Activated CD8-positive, alpha-beta T cell treated with anti-CD3 and anti-CD28 coated beads for 36 hours (primary cell): ENCODE measurements at regions of chr11 and their contacts with region 1.

Region 1: GRCh38 chr11:102614485-102614884 is 10.6 kb downstream of the MMP20 start:
- DNase-seq: no peak
- ATAC-seq: peak; percentile 28
- H3K4me3 Mint-ChIP-seq: no peak overlapping the region
- H3K27ac Mint-ChIP-seq: no peak overlapping the region
- H3K4me1 Mint-ChIP-seq: peaks cover 5% of the 10 kb centered on the region
- H3K27me3 Mint-ChIP-seq: no peaks in the 10 kb centered on the region
- CTCF ChIP-seq: peak; percentile 25

Region 2: GRCh38 chr11:102268329-102269193 is 345.9 kb before region 1 on chr11:
- CTCF ChIA-PET with region 1: interaction called, 15 read pairs
- POLR2A ChIA-PET with region 1: no interaction called
- intact Hi-C with region 1: no loop called
- DNase-seq: peak; percentile 87
- ATAC-seq: peak; percentile 99
- H3K4me3 Mint-ChIP-seq: peak overlapping the region; percentile 68
- H3K27ac Mint-ChIP-seq: no peak overlapping the region
- H3K4me1 Mint-ChIP-seq: peaks cover 19% of the 10 kb centered on the region
- H3K27me3 Mint-ChIP-seq: peaks cover 15% of the 10 kb centered on the region
- CTCF ChIP-seq: peak; percentile 66

Region 3: GRCh38 chr11:102293873-102294601 is 320.4 kb before region 1 on chr11:
- CTCF ChIA-PET with region 1: interaction called, 17 read pairs
- POLR2A ChIA-PET with region 1: no interaction called
- intact Hi-C with region 1: no loop called
- DNase-seq: peak; percentile 30
- ATAC-seq: peak; percentile 95
- H3K4me3 Mint-ChIP-seq: peak overlapping the region; percentile 78
- H3K27ac Mint-ChIP-seq: peak overlapping the region; percentile 96
- H3K4me1 Mint-ChIP-seq: peaks cover 24% of the 10 kb centered on the region
- H3K27me3 Mint-ChIP-seq: no peaks in the 10 kb centered on the region
- CTCF ChIP-seq: peak; percentile 69

Region 4: GRCh38 chr11:102488208-102488607 is 126.3 kb before region 1 on chr11:
- CTCF ChIA-PET with region 1: interaction called, 14 read pairs
- POLR2A ChIA-PET with region 1: no interaction called
- intact Hi-C with region 1: no loop called
- DNase-seq: peak; percentile 26
- ATAC-seq: peak; percentile 69
- H3K4me3 Mint-ChIP-seq: no peak overlapping the region
- H3K27ac Mint-ChIP-seq: peak overlapping the region; percentile 59
- H3K4me1 Mint-ChIP-seq: peaks cover 40% of the 10 kb centered on the region
- H3K27me3 Mint-ChIP-seq: no peaks in the 10 kb centered on the region
- CTCF ChIP-seq: no peak

Region 5: DNA sequence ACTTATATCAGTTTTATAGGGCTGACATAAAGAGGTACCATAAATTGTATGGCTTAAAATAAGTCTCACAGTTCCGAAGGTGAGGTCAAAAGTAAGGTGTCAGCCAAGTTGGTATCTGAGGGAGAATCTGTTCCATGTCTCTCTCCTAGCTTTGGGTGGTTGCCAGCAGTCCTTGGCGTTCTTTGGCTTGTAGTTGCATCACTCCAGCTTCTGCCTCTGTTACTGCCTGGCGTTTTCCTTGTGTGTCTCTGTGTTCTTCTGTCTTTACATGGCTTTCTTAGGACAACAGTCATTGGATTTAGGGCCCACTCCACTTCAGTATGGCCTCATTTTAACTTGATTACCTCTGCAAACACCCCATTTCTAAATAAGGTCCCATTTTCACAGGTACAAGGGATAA is 100.6 kb before region 1 on chr11:
- CTCF ChIA-PET with region 1: interaction called, 14 read pairs
- POLR2A ChIA-PET with region 1: no interaction called
- intact Hi-C with region 1: no loop called
- DNase-seq: no peak
- ATAC-seq: no peak
- H3K4me3 Mint-ChIP-seq: no peak overlapping the region
- H3K27ac Mint-ChIP-seq: no peak overlapping the region
- H3K4me1 Mint-ChIP-seq: no peaks in the 10 kb centered on the region
- H3K27me3 Mint-ChIP-seq: no peaks in the 10 kb centered on the region
- CTCF ChIP-seq: no peak

Region 6: GRCh38 chr11:102553835-102554282 is 60.6 kb before region 1 on chr11:
- CTCF ChIA-PET with region 1: interaction called, 21 read pairs
- POLR2A ChIA-PET with region 1: no interaction called
- intact Hi-C with region 1: no loop called
- DNase-seq: no peak
- ATAC-seq: no peak
- H3K4me3 Mint-ChIP-seq: no peak overlapping the region
- H3K27ac Mint-ChIP-seq: no peak overlapping the region
- H3K4me1 Mint-ChIP-seq: no peaks in the 10 kb centered on the region
- H3K27me3 Mint-ChIP-seq: no peaks in the 10 kb centered on the region
- CTCF ChIP-seq: no peak

Region 7: DNA sequence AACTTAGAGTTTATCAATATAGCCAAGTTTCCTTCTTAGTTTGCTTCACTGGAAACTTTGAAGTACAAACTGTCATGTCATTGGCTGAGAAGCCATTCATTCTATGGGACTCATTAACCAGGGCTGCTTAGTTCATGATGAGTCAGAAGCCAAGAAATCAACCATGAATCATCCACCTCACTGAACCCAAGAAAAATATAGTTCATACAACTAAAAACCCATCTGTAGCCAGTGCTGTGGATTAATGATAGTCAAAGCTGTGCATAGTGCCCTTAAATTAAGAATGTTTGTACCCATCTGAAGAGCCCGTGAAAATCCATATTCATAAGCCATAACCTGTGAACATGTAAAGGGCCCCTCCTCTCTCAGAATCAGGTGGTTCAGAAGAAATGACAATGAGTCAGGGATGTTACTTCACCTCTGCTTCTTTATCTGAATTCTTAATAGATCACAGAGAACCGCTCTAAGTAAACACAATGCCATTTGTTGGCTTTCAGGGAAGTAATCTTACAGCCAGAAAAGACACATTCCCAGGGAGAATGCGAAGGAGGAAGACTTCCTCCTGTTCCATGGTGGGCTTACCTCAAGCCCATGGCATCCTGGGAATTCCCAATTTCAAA is 14.7 kb before region 1 on chr11:
- CTCF ChIA-PET with region 1: interaction called, 33 read pairs
- POLR2A ChIA-PET with region 1: no interaction called
- intact Hi-C with region 1: no loop called
- DNase-seq: peak; percentile 38
- ATAC-seq: peak; percentile 97
- H3K4me3 Mint-ChIP-seq: no peak overlapping the region
- H3K27ac Mint-ChIP-seq: peak overlapping the region; percentile 48
- H3K4me1 Mint-ChIP-seq: peaks cover 26% of the 10 kb centered on the region
- H3K27me3 Mint-ChIP-seq: no peaks in the 10 kb centered on the region
- CTCF ChIP-seq: no peak